A549 (cell line): ENCODE measurements at regions of chr19 and their contacts with region 1.

Region 1: DNA sequence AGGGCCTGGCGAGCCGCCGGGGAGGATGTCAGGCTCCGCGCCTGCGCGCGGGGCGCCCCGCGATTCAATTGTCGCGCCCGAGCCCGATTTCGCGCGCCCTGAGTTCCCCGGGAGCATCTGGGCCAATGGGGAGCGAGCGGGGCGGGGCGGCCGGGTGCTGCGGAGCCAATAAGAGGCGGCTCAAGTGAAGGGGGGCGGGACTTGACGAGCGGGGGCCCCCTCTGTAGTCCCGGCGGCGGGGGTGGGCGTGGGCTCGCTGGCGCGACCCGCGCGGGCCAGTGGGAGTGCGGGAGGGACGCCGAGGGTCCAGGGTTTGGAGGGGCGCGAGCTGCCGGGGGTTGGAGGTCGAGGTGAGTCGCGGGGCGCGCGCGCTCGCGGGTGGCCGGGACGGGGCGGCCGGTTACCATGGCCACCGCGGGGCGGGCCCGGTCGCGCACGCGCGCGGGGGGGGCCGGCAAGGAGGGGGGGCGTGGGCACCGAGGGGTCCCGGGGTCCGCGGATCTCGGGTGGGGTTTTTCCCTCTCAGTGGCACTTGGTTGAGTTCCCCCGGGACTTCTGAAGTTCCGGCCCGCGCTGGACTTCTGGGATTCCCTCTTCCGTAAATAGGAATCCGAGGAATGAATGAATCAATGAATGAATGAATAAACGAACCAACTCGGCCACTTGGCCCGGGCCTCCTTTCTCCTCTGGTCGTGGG is 744 bp downstream of the UHRF1 start:
- DNase-seq: peak; percentile 85 to 91
- ATAC-seq: peak; percentile 74 to 78
- H3K4me3 ChIP-seq: peak overlapping the region; percentile 85
- H3K27ac ChIP-seq: peak overlapping the region; percentile 93 to 95
- H3K4me1 ChIP-seq: peaks cover 45% of the 10 kb centered on the region
- CTCF ChIP-seq: no peak
- EP300 ChIP-seq: no peak
- POLR2A ChIP-seq: no peak
- RAD21 ChIP-seq: no peak

Region 2: DNA sequence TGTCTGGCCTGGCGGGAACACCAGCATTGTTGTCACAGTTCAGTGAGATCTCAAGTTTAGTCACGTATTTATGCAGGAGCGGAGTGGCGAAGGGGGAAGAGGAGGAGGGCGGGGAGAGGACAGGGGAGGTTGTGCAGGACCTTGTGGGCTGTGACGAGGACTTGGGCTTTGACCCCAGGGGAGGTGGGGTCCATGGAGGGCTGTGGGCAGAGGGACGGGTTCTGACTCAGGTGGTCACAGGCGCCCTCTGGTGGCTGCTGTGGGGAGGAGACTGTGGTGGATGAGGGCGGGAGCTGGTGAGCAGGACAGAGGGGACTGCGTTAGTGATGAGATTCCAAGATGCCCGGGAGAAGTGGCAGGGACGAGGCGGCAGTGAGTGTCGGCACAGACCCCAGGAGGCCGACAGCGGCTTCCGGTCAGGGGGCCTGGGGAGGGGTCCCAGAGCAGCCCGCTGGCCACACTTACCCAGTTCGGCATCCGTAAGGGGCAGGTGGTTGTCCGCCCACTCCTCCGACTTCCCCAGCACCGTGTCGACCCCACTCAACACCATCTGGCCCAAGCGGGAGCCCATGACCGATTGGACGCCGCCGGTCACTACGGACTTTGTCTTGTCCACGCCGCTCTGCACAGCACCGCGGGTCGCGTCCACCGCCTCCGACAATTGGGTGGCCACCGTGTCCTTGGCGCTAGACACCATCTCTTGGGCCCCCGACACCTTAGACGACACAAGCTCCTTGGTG is 58.3 kb before region 1 on chr19:
- CTCF ChIA-PET with region 1: interaction called, 24 read pairs
- POLR2A ChIA-PET with region 1: interaction called, 3 read pairs
- DNase-seq: peak; percentile 52 to 63
- ATAC-seq: peak; percentile 93 to 97
- H3K4me3 ChIP-seq: no peak overlapping the region
- H3K27ac ChIP-seq: no peak overlapping the region
- H3K4me1 ChIP-seq: no peaks in the 10 kb centered on the region
- CTCF ChIP-seq: peak; percentile 54
- EP300 ChIP-seq: no peak
- POLR2A ChIP-seq: no peak
- RAD21 ChIP-seq: peak; percentile 64 to 65

Region 3: GRCh38 chr19:4867534-4868285 is 42.3 kb before region 1 on chr19 and contains the start of gene PLIN3:
- CTCF ChIA-PET with region 1: interaction called, 170 read pairs
- POLR2A ChIA-PET with region 1: interaction called, 13 read pairs
- DNase-seq: peak; percentile 93 to 96
- ATAC-seq: peak; percentile 84 to 88
- H3K4me3 ChIP-seq: peak within 1 kb of the TSS; percentile 97
- H3K27ac ChIP-seq: peak within 1 kb of the TSS; percentile 90 to 94
- H3K4me1 ChIP-seq: peaks cover 37% of the 10 kb centered on the region
- CTCF ChIP-seq: no peak
- EP300 ChIP-seq: no peak
- POLR2A ChIP-seq: peak; percentile 25; the same call in 1 of the 2 replicates
- RAD21 ChIP-seq: no peak
- polyA plus RNA-seq, gene PLIN3: 28.4 and 30.1 TPM in 2 replicates

Region 4: DNA sequence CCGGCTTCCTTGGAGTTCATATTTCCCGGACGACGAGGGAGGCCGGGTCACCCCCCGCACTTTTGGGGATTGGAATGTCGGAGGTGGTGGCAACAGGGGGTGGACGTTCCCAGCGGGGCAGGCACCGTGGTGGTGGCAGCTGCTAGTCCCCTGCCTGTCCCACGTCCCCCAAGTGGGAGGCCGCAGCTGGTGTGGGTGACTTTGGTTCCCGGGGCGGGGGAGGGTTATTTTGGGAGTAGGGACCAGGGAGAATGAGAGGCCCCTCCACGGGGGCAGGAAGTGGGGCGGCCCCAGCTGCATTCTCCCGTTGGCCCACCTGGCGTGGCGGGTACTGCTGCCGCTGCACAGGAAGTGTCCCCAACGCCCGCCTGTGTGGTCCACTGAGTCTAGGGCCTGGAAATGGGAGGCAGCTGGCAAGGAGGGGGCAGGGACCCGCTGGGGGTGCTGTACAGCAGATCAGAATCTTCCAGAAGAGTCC is 31.5 kb before region 1 on chr19:
- CTCF ChIA-PET with region 1: interaction called, 170 read pairs
- POLR2A ChIA-PET with region 1: interaction called, 3 read pairs
- DNase-seq: no peak
- ATAC-seq: no peak
- H3K4me3 ChIP-seq: no peak overlapping the region
- H3K27ac ChIP-seq: no peak overlapping the region
- H3K4me1 ChIP-seq: no peaks in the 10 kb centered on the region
- CTCF ChIP-seq: no peak
- EP300 ChIP-seq: no peak
- POLR2A ChIP-seq: no peak
- RAD21 ChIP-seq: no peak

Region 5: GRCh38 chr19:4929186-4929585 is 19.1 kb after region 1 on chr19:
- CTCF ChIA-PET with region 1: interaction called, 14 read pairs
- POLR2A ChIA-PET with region 1: no interaction called
- DNase-seq: no peak
- ATAC-seq: no peak
- H3K4me3 ChIP-seq: no peak overlapping the region
- H3K27ac ChIP-seq: no peak overlapping the region
- H3K4me1 ChIP-seq: peaks cover 11% of the 10 kb centered on the region; the same call in 2 of the 3 replicates
- CTCF ChIP-seq: no peak
- EP300 ChIP-seq: no peak
- POLR2A ChIP-seq: no peak
- RAD21 ChIP-seq: no peak